SK-N-SH (cell line): ENCODE measurements at regions of chrX and their contacts with region 1.

Region 1: DNA sequence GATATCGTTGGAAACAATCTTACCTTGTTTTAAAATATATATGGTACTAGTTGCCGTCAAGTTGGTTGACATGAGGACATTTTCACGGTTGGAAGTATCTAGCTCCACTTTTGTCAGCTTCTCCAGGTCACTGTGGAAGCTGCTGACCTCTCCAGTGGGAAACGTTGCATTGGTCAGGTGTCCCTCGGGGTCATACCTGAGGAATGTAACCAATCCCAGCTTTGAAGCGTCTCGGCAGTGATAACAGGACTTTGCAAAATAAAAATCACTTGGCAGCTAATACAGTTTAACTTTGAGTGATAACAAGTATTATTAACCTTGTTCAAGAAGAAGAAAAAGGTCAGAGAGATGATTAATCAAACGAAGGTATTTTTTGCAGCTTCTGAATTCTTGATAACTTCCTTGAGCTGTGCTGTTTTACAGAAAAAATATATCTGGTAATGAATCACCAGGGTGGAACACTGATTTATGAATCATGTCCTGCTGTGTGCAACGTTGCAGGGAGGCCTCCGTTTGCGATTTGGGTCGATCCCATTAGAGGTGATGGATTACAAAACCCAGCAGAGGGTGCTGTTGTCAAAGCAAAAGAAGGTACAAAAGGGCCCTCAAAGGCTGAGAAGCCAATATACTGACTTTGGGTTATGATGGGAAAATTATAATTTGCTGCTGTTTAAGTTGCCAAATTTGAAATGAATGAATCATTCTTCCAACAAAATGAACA is 60.1 kb downstream of the SH2D1A start:
- DNase-seq: peak; percentile 55
- H3K4me3 ChIP-seq: no peak overlapping the region
- H3K27ac ChIP-seq: no peak overlapping the region
- H3K4me1 ChIP-seq: no peaks in the 10 kb centered on the region
- H3K27me3 ChIP-seq: peaks cover 8% of the 10 kb centered on the region; the same call in 1 of the 2 replicates
- CTCF ChIP-seq: peak; percentile 79
- EP300 ChIP-seq: no peak
- RAD21 ChIP-seq: peak; percentile 88

Region 2: GRCh38 chrX:124274438-124275181 is 131.8 kb before region 1 on chrX:
- CTCF ChIA-PET with region 1: no interaction called
- POLR2A ChIA-PET with region 1: no interaction called
- DNase-seq: no peak
- H3K4me3 ChIP-seq: no peak overlapping the region
- H3K27ac ChIP-seq: no peak overlapping the region
- H3K4me1 ChIP-seq: no peaks in the 10 kb centered on the region
- H3K27me3 ChIP-seq: peaks cover 5% of the 10 kb centered on the region; the same call in 1 of the 2 replicates
- CTCF ChIP-seq: no peak
- EP300 ChIP-seq: no peak
- RAD21 ChIP-seq: no peak

Region 3: GRCh38 chrX:124388562-124388961 is 17.9 kb before region 1 on chrX:
- CTCF ChIA-PET with region 1: interaction called, 14 read pairs
- POLR2A ChIA-PET with region 1: no interaction called
- DNase-seq: peak; percentile 21
- H3K4me3 ChIP-seq: no peak overlapping the region
- H3K27ac ChIP-seq: no peak overlapping the region
- H3K4me1 ChIP-seq: no peaks in the 10 kb centered on the region
- H3K27me3 ChIP-seq: no peaks in the 10 kb centered on the region
- CTCF ChIP-seq: peak; percentile 77
- EP300 ChIP-seq: no peak
- RAD21 ChIP-seq: peak; percentile 72

Region 4: DNA sequence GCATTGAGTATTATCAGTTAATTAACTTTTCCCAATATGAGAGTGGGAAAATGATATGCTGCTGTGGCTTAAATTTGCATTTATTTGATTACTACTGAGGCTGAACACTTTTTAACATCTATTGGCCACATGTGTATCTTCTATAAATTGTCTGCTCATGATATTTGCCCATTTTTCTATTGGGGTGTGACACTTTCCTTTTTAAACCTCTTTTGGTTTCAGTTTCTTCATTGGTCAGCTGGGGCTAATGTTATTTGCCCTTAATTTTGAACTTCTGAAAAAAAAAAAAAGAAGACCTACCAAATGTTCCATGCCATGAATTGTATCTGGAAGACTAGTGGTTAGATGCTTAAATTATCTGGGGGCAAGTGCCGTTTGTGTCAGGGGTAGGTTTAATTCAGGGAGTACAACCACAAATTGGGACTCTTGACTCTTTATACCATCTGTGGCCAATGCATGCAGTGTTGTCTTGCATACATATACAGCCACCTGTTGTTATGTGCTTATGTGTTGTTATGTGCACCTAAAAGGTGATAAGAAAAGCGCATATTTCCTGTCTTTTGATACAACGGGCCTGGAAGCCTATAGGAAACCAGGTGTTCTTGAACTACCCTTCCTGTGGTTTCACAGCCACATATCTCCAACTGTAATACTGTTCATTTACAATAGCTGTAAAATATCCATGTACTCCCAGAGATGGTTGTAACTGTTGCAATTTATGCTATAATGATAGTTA is 11.1 kb before region 1 on chrX:
- CTCF ChIA-PET with region 1: interaction called, 14 read pairs
- POLR2A ChIA-PET with region 1: no interaction called
- DNase-seq: no peak
- H3K4me3 ChIP-seq: no peak overlapping the region
- H3K27ac ChIP-seq: no peak overlapping the region
- H3K4me1 ChIP-seq: no peaks in the 10 kb centered on the region
- H3K27me3 ChIP-seq: no peaks in the 10 kb centered on the region; the same call in 1 of the 2 replicates
- CTCF ChIP-seq: no peak
- EP300 ChIP-seq: no peak
- RAD21 ChIP-seq: no peak

Region 5: GRCh38 chrX:124467202-124467601 is 60.7 kb after region 1 on chrX:
- CTCF ChIA-PET with region 1: no interaction called
- POLR2A ChIA-PET with region 1: no interaction called
- DNase-seq: no peak
- H3K4me3 ChIP-seq: no peak overlapping the region
- H3K27ac ChIP-seq: no peak overlapping the region
- H3K4me1 ChIP-seq: no peaks in the 10 kb centered on the region
- H3K27me3 ChIP-seq: no peaks in the 10 kb centered on the region
- CTCF ChIP-seq: no peak
- EP300 ChIP-seq: no peak
- RAD21 ChIP-seq: no peak